ENCODE measurements at regions of chr5 and their contacts with region 1.

Region 1: DNA sequence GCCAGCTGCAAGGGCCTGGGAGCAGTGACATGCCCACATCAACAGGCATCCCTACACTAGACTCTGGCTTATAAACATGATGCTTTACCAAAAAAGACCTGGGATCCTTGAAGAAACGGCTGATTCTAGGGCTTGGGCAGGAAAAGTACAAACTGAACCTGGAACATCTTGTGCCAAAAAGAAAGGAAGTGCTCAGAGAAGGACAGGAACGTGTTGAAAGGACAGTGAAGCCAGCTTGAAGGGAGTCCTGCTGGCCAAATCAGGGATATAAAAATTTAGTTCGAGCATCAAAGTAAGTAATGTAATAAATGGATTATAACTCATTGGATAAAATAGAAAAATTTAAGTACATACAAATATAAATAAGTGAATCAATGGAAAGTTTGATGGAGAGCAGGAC is 58.1 kb downstream of the ALDH7A1 start:
- DNase-seq: no peak
- H3K4me3 ChIP-seq: no peak overlapping the region
- H3K27ac ChIP-seq: peak overlapping the region in 2 of 4 donors; percentile 7 to 28
- H3K4me1 ChIP-seq: peaks cover 0 to 23% (median 13%) of the 10 kb centered on the region in 4 donors
- H3K27me3 ChIP-seq: no peaks in the 10 kb centered on the region
- CTCF ChIP-seq: peak in 2 of 4 experiments; percentile 10 to 27
- EP300 ChIP-seq: peak in 1 of 4 donors; percentile 15
- POLR2A ChIP-seq: no peak

Region 2: DNA sequence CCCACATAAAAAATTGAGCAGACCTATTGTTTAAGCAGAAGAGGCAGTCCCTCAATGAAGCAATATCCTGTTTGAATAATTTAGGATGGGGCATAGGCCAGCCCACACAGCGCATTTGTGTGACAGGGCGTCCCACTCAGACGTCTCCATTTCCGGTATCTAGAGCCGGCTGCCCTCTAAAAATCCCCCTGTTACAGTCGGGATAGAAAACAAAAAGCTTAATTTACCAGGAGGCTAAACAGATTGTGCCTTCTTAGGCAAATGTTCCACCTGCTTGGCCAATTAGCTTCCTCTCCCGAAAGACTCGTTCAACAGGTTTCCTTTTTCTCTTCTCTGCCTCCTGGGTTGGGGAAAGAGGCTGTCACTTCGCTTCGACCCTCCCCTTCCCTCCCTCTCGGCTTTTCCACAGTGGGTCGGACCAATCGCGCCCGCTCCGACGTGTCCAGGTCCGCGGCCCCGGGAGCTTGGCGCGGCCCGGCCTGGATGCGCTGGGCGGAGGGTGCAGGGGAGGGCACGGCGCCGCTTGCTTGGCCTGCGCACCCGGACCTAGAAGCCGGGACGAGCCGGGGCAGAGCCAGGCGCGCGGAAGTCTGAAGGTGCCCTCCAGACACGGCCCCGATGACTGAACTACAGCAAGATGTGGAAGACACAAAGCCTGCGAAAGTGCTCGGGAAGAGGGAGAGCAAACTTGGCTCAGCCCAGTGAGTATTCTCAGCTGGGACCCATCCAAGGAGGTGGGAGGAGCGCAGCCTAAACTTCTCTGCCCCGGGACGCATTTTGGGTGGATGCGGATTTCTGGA is 113.7 kb before region 1 on chr5 and contains the start of gene GRAMD2B:
- intact Hi-C with region 1: loop called (anchors 5 kb)
- DNase-seq: peak; percentile 94
- H3K4me3 ChIP-seq: peak within 1 kb of the TSS; percentile 63 to 74 (median 68)
- H3K27ac ChIP-seq: peak within 1 kb of the TSS; percentile 90 to 94 (median 92)
- H3K4me1 ChIP-seq: peaks cover 2 to 31% (median 20%) of the 10 kb centered on the region in 4 donors
- H3K27me3 ChIP-seq: no peaks in the 10 kb centered on the region
- CTCF ChIP-seq: no peak
- EP300 ChIP-seq: no peak
- POLR2A ChIP-seq: peak; percentile 87 to 90
- total RNA-seq, gene GRAMD2B: 33.0 to 53.8 (median 46.5) TPM

Region 3: GRCh38 chr5:126477294-126478117 is 59.4 kb before region 1 on chr5:
- intact Hi-C with region 1: loop called (anchors 5 kb)
- DNase-seq: no peak
- H3K4me3 ChIP-seq: peak overlapping the region in 2 of 4 donors; percentile 5 to 15
- H3K27ac ChIP-seq: peak overlapping the region; percentile 22 to 74 (median 59)
- H3K4me1 ChIP-seq: peaks cover 0 to 31% (median 18%) of the 10 kb centered on the region in 4 donors
- H3K27me3 ChIP-seq: no peaks in the 10 kb centered on the region
- CTCF ChIP-seq: no peak
- EP300 ChIP-seq: no peak
- POLR2A ChIP-seq: no peak

Region 4: GRCh38 chr5:126490167-126490940 is 46.5 kb before region 1 on chr5:
- intact Hi-C with region 1: loop called (anchors 5 kb)
- DNase-seq: peak; percentile 75
- H3K4me3 ChIP-seq: no peak overlapping the region
- H3K27ac ChIP-seq: peak overlapping the region; percentile 33 to 69 (median 51)
- H3K4me1 ChIP-seq: peaks cover 0 to 4% (median 0%) of the 10 kb centered on the region in 4 donors
- H3K27me3 ChIP-seq: no peaks in the 10 kb centered on the region
- CTCF ChIP-seq: no peak
- EP300 ChIP-seq: no peak
- POLR2A ChIP-seq: no peak

Region 5: GRCh38 chr5:126583761-126584160 is 46.9 kb after region 1 on chr5:
- intact Hi-C with region 1: no loop called
- DNase-seq: no peak
- H3K4me3 ChIP-seq: no peak overlapping the region
- H3K27ac ChIP-seq: no peak overlapping the region
- H3K4me1 ChIP-seq: no peaks in the 10 kb centered on the region
- H3K27me3 ChIP-seq: no peaks in the 10 kb centered on the region
- CTCF ChIP-seq: no peak
- EP300 ChIP-seq: no peak
- POLR2A ChIP-seq: no peak

Region 6: GRCh38 chr5:126594676-126595485 is 58.0 kb after region 1 on chr5 and contains the start of gene ALDH7A1:
- intact Hi-C with region 1: loop called (anchors 5 kb)
- DNase-seq: peak; percentile 93
- H3K4me3 ChIP-seq: peak within 1 kb of the TSS; percentile 41 to 70 (median 67)
- H3K27ac ChIP-seq: peak within 1 kb of the TSS; percentile 82 to 85 (median 83)
- H3K4me1 ChIP-seq: peaks cover 0 to 23% (median 13%) of the 10 kb centered on the region in 4 donors
- H3K27me3 ChIP-seq: no peaks in the 10 kb centered on the region
- CTCF ChIP-seq: peak in 2 of 4 experiments; percentile 15 to 42
- EP300 ChIP-seq: no peak
- POLR2A ChIP-seq: peak in 1 of 2 donors; percentile 18
- total RNA-seq, gene ALDH7A1: 16.0 to 22.2 (median 17.8) TPM

Region 7: DNA sequence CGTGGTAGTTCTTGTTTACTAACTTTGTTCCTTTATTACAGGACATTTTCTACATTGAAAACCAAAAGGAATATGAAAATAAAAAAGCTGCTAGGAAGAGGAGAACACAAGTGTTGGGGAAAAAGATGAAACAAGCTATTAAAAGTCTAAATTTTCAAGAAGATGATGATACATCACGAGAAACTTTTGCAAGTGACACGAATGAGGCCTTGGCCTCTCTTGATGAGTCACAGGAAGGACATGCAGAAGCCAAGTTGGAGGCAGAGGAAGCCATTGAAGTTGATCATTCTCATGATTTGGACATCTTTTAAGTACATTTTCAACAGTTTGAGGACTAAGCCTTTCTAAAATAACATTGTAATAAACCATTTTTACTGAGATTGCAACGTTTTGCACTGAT is 87.7 kb after region 1 on chr5:
- intact Hi-C with region 1: no loop called
- DNase-seq: no peak
- H3K4me3 ChIP-seq: no peak overlapping the region
- H3K27ac ChIP-seq: no peak overlapping the region
- H3K4me1 ChIP-seq: peaks cover 0 to 12% (median 3%) of the 10 kb centered on the region in 4 donors
- H3K27me3 ChIP-seq: no peaks in the 10 kb centered on the region
- CTCF ChIP-seq: no peak
- EP300 ChIP-seq: no peak
- POLR2A ChIP-seq: no peak